Activated CD8-positive, alpha-beta memory T cell treated with anti-CD3 and anti-CD28 coated beads, Interleukin-2, amount 10 ng/mL, durations not matched to agents 7 days and 5 days (primary cell): ENCODE measurements at regions of chr9 and their contacts with region 1.

Region 1: DNA sequence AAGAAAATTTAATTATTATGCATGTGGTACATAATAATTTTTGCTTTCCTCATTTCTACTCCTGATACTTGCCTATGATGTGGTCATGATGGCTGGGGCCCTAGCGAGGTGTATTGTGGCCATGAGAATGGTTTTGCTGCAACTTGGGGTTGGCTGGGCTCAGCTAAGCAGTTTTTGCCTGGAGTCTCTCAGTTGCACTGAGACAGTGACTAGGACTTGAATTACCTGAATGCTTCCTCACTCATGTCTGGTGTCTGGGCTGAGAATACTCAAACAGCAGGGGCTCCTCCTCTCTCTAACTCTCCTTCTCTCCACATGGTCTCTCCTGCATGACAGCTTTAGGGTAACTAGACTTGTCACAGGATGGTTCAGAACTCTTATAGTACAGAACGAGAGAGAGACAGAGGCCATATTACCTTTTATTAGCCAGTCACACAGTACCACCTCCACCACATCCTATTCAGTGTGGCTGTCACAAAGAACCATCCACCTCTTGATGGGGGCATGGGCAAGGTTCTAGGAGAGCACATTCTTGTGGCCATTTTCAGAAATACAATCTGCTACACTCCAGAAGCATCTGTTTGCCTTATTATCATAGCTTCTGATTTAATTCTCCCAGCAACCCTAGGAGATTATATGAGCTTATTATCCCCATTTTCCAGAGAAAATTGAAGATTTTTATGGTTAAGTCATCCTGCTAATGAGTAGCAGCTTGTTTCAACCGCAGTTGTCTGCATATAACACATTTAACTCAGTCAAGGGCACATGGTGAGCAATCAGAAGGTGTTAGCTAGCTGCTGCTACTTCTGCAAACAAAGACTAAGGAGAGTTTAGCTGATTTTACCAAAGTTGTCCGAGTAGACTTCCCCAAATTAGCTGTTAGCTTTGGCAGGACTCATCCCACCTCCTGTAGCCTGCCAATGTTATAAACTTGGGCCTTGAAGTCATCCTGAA is 245.1 kb downstream of the DOCK8 start:
- DNase-seq: peak; percentile 75
- ATAC-seq: peak; percentile 79
- H3K4me3 Mint-ChIP-seq: no peak overlapping the region
- H3K27ac Mint-ChIP-seq: peak overlapping the region; percentile 87
- H3K4me1 Mint-ChIP-seq: peaks cover 42% of the 10 kb centered on the region
- H3K27me3 Mint-ChIP-seq: no peaks in the 10 kb centered on the region

Region 2: GRCh38 chr9:447230-448025 is 12.3 kb before region 1 on chr9:
- CTCF ChIA-PET with region 1: interaction called, 13 read pairs
- DNase-seq: peak; percentile 94
- ATAC-seq: peak; percentile 99
- H3K4me3 Mint-ChIP-seq: peak overlapping the region; percentile 46
- H3K27ac Mint-ChIP-seq: peak overlapping the region; percentile 84
- H3K4me1 Mint-ChIP-seq: peaks cover 42% of the 10 kb centered on the region
- H3K27me3 Mint-ChIP-seq: no peaks in the 10 kb centered on the region